CD4-positive, alpha-beta memory T cell (primary cell): ENCODE measurements at regions of chr13 and their contacts with region 1.

Region 1: DNA sequence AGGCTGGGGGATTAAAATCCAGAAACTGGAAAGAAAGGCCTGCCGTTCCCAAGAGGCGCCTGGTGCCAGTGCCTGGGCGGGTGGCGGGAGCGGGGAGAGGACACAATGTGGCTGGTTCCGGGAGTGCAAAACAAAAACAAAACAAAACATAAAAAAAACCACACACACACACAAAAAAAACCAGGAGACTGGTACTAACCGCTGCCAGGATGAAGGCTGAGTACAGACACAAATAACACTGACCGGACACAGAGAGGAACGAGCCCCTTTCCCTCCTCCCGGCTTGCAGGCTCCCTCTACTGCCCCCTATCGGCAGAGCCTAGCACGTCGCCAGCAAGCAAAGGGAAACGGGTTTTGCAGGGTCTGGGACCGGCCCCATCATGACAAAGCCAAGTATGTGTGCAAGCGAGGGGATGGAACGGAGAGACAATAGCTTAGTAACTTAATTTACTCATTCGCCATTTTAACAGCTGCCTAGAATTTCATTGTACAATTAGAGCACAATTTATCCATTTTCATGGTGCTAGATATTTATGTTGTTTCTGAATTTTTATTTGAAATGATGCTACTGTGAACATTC is 17.9 kb upstream of the ZDHHC20 start:
- DNase-seq: peak; percentile 67 to 75 (median 70)
- H3K4me3 ChIP-seq: peak overlapping the region in 1 of 2 donors; percentile 42
- H3K4me3 Mint-ChIP-seq: peak overlapping the region; percentile 75 to 86 (median 83)
- H3K27ac ChIP-seq: no peak overlapping the region
- H3K27ac Mint-ChIP-seq: peak overlapping the region in 6 of 7 donors; percentile 2 to 76 (median 42)
- H3K4me1 ChIP-seq: peaks cover 15% of the 10 kb centered on the region
- H3K4me1 Mint-ChIP-seq: peaks cover 7 to 15% (median 10%) of the 10 kb centered on the region in 4 donors
- H3K27me3 ChIP-seq: no peaks in the 10 kb centered on the region
- H3K27me3 Mint-ChIP-seq: peaks cover 0 to 2% of the 10 kb centered on the region in 2 donors

Region 2: DNA sequence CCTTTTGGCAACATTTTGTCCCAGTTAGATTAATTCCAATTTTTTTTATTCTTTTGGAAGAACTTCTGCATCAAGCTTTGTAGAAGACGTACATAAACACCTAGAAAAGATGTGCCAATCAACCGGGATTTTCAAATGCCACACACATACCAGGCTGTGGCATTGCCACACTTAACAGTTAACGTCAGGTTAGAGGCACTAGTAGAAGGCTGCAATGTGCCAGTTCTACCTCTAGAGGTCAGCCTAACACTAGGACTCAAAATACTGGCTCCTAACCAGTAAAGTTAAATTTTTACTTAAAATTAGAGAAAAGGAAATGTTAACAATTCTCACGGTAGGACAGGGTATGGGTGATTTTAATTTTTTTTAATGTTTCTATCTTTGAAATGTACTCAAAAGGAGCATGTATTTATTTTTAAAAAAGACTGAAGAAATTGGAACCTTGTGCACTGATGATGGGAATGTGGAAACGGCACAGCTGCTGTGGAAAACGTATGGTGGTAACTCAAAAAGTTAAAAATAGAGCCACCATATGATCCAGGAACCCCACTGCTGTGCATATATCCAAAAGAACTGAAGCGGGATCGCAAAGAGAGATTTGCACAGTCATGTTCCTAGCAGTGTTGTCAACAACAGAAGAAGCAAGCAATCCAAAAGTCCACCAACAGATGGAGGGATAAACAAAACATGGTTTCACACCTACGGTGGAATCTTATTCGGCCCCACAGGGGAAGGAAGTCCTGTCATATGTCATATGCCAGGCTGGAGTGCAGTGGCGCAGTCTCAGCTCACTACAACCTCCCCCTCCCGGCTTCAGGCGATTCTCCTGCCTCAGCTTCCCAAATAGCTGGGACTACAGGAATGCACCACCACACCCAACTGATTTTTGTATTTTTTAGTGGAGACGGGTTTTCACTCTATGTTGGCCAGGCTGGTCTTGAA is 981.6 kb before region 1 on chr13:
- CTCF ChIA-PET with region 1: interaction called, 3 read pairs
- POLR2A ChIA-PET with region 1: no interaction called
- intact Hi-C with region 1: loop called (anchors 1 kb)
- DNase-seq: peak; percentile 62 to 70 (median 68)
- H3K4me3 ChIP-seq: no peak overlapping the region
- H3K4me3 Mint-ChIP-seq: no peak overlapping the region
- H3K27ac ChIP-seq: no peak overlapping the region
- H3K27ac Mint-ChIP-seq: peak overlapping the region in 1 of 7 donors; percentile 32
- H3K4me1 ChIP-seq: peaks cover 6% of the 10 kb centered on the region
- H3K4me1 Mint-ChIP-seq: peaks cover 0 to 7% (median 2%) of the 10 kb centered on the region in 4 donors
- H3K27me3 ChIP-seq: no peaks in the 10 kb centered on the region
- H3K27me3 Mint-ChIP-seq: no peaks in the 10 kb centered on the region

Region 3: DNA sequence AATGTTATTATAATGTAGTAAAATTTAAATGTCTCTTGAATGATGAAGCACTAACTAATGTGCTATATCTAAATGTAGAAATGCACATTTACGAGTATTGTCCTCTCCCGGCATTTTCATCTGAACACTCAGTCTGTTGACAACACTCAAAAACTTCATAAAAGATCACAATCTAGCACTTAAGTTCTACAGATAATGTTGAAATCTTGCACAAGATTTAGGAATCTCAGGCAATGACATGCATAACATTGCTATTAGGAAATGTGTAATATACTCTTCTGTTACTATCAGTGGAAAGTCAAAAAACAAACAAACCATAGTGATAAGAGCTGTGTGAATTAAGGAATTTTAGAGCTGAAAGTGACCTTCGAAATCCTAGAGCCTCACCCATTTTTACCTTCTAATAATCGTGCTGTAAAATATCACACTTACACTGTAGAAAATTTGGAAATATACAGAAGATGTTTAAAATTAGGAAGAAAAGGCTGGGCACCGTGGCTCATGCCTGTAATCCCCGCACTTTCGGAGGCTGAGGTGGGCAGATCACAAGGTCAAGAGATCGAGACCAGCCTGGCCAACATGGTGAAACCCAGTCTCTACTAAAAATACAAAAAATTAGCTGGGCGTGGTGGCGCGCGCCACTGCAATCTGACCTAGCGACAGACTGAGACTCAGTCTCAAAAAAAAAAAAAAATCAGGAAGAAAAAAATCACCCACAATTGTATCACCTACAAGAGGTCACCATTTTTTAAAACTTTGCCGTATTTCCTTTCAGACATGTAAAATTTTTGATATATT is 536.7 kb before region 1 on chr13:
- CTCF ChIA-PET with region 1: interaction called, 28 read pairs
- POLR2A ChIA-PET with region 1: no interaction called
- intact Hi-C with region 1: no loop called
- DNase-seq: no peak
- H3K4me3 ChIP-seq: no peak overlapping the region
- H3K4me3 Mint-ChIP-seq: no peak overlapping the region
- H3K27ac ChIP-seq: no peak overlapping the region
- H3K27ac Mint-ChIP-seq: no peak overlapping the region
- H3K4me1 ChIP-seq: peaks cover 3% of the 10 kb centered on the region
- H3K4me1 Mint-ChIP-seq: peaks cover 0 to 8% (median under 1%) of the 10 kb centered on the region in 4 donors
- H3K27me3 ChIP-seq: no peaks in the 10 kb centered on the region
- H3K27me3 Mint-ChIP-seq: peaks cover 25 to 30% of the 10 kb centered on the region in 2 donors

Region 4: GRCh38 chr13:21176220-21176982 is 300.6 kb before region 1 on chr13 and contains the starts of genes MRPL57 and SKA3:
- CTCF ChIA-PET with region 1: interaction called, 25 read pairs
- POLR2A ChIA-PET with region 1: no interaction called
- intact Hi-C with region 1: loop called (anchors 5 kb)
- DNase-seq: peak; percentile 92 to 95 (median 95)
- H3K4me3 ChIP-seq: peak within 1 kb of the TSS; percentile 57 to 84
- H3K4me3 Mint-ChIP-seq: peak within 1 kb of the TSS; percentile 91 to 99 (median 97)
- H3K27ac ChIP-seq: peak within 1 kb of the TSS; percentile 89
- H3K27ac Mint-ChIP-seq: peak within 1 kb of the TSS; percentile 91 to 99 (median 97)
- H3K4me1 ChIP-seq: peaks cover 21% of the 10 kb centered on the region
- H3K4me1 Mint-ChIP-seq: peaks cover 12 to 31% (median 17%) of the 10 kb centered on the region in 4 donors
- H3K27me3 ChIP-seq: no peaks in the 10 kb centered on the region
- H3K27me3 Mint-ChIP-seq: no peaks in the 10 kb centered on the region
- total RNA-seq, gene MRPL57: 22.8 to 24.5 TPM
- total RNA-seq, gene SKA3: 0.33 TPM in 1 of 2 experiments, not detected in the other

Region 5: GRCh38 chr13:21344662-21345176 is 132.3 kb before region 1 on chr13:
- CTCF ChIA-PET with region 1: interaction called, 14 read pairs
- POLR2A ChIA-PET with region 1: no interaction called
- intact Hi-C with region 1: no loop called
- DNase-seq: peak; percentile 31 to 52 (median 44)
- H3K4me3 ChIP-seq: peak overlapping the region in 1 of 2 donors; percentile 35
- H3K4me3 Mint-ChIP-seq: peak overlapping the region; percentile 66 to 80 (median 74)
- H3K27ac ChIP-seq: peak overlapping the region; percentile 48
- H3K27ac Mint-ChIP-seq: peak overlapping the region; percentile 81 to 93 (median 88)
- H3K4me1 ChIP-seq: peaks cover 30% of the 10 kb centered on the region
- H3K4me1 Mint-ChIP-seq: peaks cover 18 to 31% (median 25%) of the 10 kb centered on the region in 4 donors
- H3K27me3 ChIP-seq: no peaks in the 10 kb centered on the region
- H3K27me3 Mint-ChIP-seq: no peaks in the 10 kb centered on the region

Region 6: DNA sequence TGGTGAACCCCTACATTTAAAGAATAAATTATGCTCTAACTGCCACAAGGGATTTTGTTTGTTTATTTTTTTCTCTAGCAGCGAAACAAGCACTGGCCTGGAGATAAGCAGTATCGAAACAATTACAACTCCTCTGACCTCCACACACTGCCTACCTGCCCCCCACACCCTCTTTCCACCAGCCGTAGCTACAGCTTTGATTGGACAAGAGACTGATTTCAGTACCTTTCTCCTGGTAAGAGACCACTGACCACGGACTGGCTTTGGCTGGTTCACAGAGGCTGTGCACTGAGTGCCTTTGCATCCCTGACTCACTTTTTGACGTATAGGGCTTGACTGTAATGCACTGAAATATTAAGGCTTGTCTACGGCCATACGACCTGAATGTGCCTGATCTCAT is 10.5 kb before region 1 on chr13:
- CTCF ChIA-PET with region 1: interaction called, 72 read pairs
- POLR2A ChIA-PET with region 1: no interaction called
- intact Hi-C with region 1: no loop called
- DNase-seq: no peak
- H3K4me3 ChIP-seq: no peak overlapping the region
- H3K4me3 Mint-ChIP-seq: no peak overlapping the region
- H3K27ac ChIP-seq: no peak overlapping the region
- H3K27ac Mint-ChIP-seq: no peak overlapping the region
- H3K4me1 ChIP-seq: no peaks in the 10 kb centered on the region
- H3K4me1 Mint-ChIP-seq: no peaks in the 10 kb centered on the region
- H3K27me3 ChIP-seq: no peaks in the 10 kb centered on the region
- H3K27me3 Mint-ChIP-seq: peaks cover 0 to 1% of the 10 kb centered on the region in 2 donors

Region 7: DNA sequence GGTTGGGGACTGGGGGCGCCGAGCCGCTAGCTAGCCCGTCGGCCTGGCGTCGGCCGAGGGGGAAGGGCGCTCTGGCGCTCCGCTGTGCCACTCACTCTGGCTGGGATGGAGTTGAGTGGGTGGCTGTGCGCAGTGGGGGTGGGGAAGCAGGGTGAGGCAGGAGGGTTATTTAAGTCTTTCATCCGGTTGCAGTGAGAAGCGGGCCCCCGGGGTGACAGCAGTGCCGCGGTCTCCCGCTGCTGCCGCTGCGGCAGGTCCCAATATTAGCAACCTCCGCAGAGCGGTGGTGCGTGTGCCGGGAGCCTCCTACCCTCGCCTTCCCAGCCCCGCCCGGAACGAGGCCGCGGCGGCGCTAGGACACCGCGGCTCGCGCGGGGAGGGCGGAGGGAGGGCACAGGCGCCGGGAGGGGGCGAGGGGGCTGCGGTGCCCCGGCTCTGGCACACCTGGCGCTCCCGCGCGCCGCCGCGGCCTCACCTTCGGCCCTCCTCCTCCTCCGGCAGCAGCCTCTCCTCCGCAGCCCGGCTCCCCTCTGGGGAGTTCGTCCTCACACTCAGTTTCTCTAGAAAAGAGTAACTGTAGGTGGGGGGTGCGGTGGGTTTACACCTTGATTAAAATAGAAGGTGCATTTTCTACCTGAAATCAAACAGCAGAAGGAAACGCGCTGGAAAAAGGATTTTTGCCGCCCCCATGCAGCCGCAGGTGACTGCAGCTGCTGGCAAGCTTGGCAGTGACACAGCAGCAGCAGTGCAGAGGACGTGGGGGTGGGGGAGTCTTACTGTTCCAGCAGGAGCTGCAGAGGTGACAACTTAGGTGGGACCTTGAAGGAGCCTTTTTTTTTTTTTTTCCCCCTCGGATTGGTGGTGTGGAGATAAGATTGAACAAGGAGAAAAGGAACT is 198.4 kb after region 1 on chr13:
- CTCF ChIA-PET with region 1: no interaction called
- POLR2A ChIA-PET with region 1: no interaction called
- intact Hi-C with region 1: no loop called
- DNase-seq: peak; percentile 42 to 65 (median 45)
- H3K4me3 ChIP-seq: peak overlapping the region; percentile 40 to 42
- H3K4me3 Mint-ChIP-seq: peak overlapping the region; percentile 76 to 96 (median 92)
- H3K27ac ChIP-seq: no peak overlapping the region
- H3K27ac Mint-ChIP-seq: peak overlapping the region in 5 of 7 donors; percentile 43 to 89 (median 48)
- H3K4me1 ChIP-seq: peaks cover 36% of the 10 kb centered on the region
- H3K4me1 Mint-ChIP-seq: peaks cover 22 to 49% (median 32%) of the 10 kb centered on the region in 4 donors
- H3K27me3 ChIP-seq: peaks cover 30% of the 10 kb centered on the region
- H3K27me3 Mint-ChIP-seq: peaks cover 6 to 8% of the 10 kb centered on the region in 2 donors

Region 8: GRCh38 chr13:21938168-21938567 is 461.2 kb after region 1 on chr13:
- CTCF ChIA-PET with region 1: no interaction called
- POLR2A ChIA-PET with region 1: no interaction called
- intact Hi-C with region 1: no loop called
- DNase-seq: no peak
- H3K4me3 ChIP-seq: no peak overlapping the region
- H3K4me3 Mint-ChIP-seq: no peak overlapping the region
- H3K27ac ChIP-seq: no peak overlapping the region
- H3K27ac Mint-ChIP-seq: no peak overlapping the region
- H3K4me1 ChIP-seq: no peaks in the 10 kb centered on the region
- H3K4me1 Mint-ChIP-seq: no peaks in the 10 kb centered on the region
- H3K27me3 ChIP-seq: no peaks in the 10 kb centered on the region
- H3K27me3 Mint-ChIP-seq: no peaks in the 10 kb centered on the region